ENCODE measurements at regions of chr1 and their contacts with region 1.

Region 1: GRCh38 chr1:159214149-159214760 is 9.6 kb downstream of the ACKR1 start:
- DNase-seq: peak in 1 of 3 donors; percentile 40
- ATAC-seq: peak; percentile 70
- H3K4me3 ChIP-seq: no peak overlapping the region
- H3K4me1 ChIP-seq: no peaks in the 10 kb centered on the region
- CTCF ChIP-seq: peak; percentile 71

Region 2: GRCh38 chr1:158916085-158916484 is 298.2 kb before region 1 on chr1:
- intact Hi-C with region 1: no loop called
- DNase-seq: no peak
- ATAC-seq: no peak
- H3K4me3 ChIP-seq: no peak overlapping the region
- H3K4me1 ChIP-seq: no peaks in the 10 kb centered on the region
- CTCF ChIP-seq: no peak

Region 3: DNA sequence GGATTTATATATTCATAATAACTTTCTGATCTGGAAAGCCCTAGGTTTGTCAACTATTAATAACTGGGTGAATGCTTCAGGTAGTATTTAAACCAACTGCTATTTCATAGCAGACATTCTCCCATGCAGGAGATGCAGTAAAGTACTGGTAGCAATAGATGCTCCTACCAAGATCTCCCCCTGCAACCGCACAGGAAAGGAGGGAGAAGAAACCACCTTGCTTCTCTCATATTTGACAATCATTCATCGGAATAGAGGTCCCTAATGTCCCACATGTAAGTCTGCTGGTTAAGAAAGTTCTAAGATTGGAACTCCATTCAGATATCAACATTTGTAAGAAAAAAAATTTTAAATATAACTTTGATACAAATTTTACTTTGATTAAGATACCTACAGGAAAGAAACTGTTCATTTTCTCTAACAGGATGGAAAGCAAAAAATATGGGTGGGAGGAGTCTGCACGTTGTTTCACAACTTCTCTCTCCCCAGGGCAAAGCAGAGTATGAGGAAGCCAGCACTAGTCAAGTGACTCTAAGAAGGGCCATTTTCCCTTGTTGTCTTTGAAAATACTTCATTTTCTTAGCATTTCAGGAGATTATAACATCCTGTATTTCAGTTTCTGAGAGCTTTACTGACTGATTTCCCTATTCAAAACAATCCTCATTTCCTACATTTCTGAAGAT is 283.1 kb before region 1 on chr1 and contains the start of gene PYHIN1:
- intact Hi-C with region 1: no loop called
- DNase-seq: peak in 1 of 3 donors; percentile 16
- ATAC-seq: peak; percentile 79
- H3K4me3 ChIP-seq: no peak within 1 kb of the TSS
- H3K4me1 ChIP-seq: no peaks in the 10 kb centered on the region
- CTCF ChIP-seq: no peak
- total RNA-seq, gene PYHIN1: 0.87 to 2.0 (median 0.98) TPM

Region 4: GRCh38 chr1:159132271-159132881 is 81.9 kb before region 1 on chr1:
- intact Hi-C with region 1: loop called in 1 of 2 experiments (anchors 10 kb)
- DNase-seq: peak in 2 of 3 donors; percentile 61 to 67
- ATAC-seq: peak; percentile 51
- H3K4me3 ChIP-seq: no peak overlapping the region
- H3K4me1 ChIP-seq: no peaks in the 10 kb centered on the region
- CTCF ChIP-seq: peak; percentile 61

Region 5: GRCh38 chr1:159161001-159161718 is 53.1 kb before region 1 on chr1:
- intact Hi-C with region 1: loop called in 1 of 2 experiments (anchors 5 kb)
- DNase-seq: peak in 2 of 3 donors; percentile 54 to 70
- ATAC-seq: peak; percentile 94
- H3K4me3 ChIP-seq: no peak overlapping the region
- H3K4me1 ChIP-seq: no peaks in the 10 kb centered on the region
- CTCF ChIP-seq: peak; percentile 75

Region 6: GRCh38 chr1:159469921-159470533 is 255.8 kb after region 1 on chr1:
- intact Hi-C with region 1: no loop called
- DNase-seq: no peak
- ATAC-seq: no peak
- H3K4me3 ChIP-seq: no peak overlapping the region
- H3K4me1 ChIP-seq: no peaks in the 10 kb centered on the region
- CTCF ChIP-seq: no peak